ENCODE measurements at regions of chr10 and their contacts with region 1.

Region 1: DNA sequence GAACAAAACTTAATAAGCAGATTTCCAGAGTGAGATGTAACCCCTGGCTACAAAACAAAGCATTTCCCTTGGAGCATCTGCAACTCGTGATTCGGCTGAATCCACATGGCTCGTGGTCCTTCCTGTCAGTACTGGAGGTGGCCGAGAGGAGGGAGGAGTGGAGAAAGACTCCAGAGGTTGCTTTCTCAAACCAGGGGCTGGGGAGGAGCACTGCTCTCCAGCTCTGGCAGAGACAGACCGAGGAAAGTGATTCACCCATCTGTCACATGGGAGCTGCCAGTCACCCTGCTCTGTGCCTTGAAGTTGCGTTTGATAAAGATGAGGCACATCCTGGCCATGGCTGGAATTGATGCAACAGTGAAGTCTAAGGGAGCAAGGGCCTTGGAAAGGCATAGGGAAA is 72.7 kb downstream of the COL13A1 start:
- DNase-seq: no peak

Region 2: DNA sequence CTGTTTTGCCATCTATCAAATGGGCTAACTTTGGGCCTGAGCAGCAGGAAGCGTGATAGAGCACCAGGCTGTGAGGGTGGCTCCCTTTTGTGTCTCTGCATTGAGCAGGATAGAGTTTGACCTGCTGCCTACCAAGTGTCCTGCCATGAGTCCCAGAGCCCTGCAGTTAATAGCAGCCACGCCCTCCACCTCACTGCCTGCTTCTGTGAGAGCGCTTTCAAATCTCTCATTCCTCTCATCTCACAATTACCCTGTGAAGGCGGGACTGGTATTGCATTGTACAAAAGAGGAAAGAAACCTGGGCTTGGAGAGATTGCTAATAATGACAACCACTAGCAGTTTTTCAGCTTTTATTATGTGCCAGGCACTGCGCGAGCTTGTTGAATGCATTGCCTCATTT is 1377.8 kb after region 1 on chr10:
- intact Hi-C with region 1: loop called in 1 of 2 experiments (anchors 5 kb)
- DNase-seq: no peak